Posterior vena cava (tissue), 2 donors: ENCODE measurements at regions of chr2 and their contacts with region 1.

Region 1: GRCh38 chr2:128076461-128077106 is 14.4 kb upstream of the UGGT1 start:
- DNase-seq: no peak

Region 2: DNA sequence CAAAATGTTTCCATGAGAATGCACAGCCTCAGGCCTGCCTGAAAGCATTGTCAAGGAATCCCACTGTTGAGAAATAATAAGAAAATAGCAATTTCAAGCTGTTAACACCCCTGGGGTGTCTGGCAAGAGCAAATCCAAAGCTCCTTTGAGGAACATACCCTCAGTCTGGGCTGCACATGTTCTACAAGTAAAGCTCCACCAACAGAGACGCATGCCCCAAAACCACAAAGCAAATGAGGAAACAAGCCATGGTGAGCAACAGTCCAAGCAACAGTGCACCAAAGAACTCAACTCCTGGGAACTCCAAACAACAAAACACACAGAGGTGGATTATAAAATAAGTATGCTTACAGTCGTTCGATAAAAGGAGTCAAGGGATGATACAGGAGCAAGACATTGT is 896.8 kb before region 1 on chr2:
- intact Hi-C with region 1: no loop called
- DNase-seq: no peak

Region 3: DNA sequence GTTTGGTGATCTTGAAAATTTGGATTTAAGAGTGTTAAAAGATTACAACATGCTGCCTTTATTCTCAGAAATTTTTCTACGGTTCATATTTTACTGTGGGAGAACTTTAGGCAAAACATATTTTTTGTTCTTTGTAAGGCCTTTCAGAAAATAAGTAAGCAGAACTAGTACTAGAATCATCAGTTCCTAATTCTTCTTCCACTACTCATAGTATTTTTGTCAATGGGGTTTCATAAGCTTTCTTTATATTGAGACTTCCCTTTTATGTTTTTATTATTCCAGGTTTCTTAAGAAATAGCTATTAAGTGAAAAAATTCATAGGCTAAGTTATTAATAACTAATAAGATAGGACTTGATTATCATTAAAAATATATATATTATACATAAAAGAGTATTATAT is 26.8 kb after region 1 on chr2:
- intact Hi-C with region 1: loop called in 1 of 2 experiments (anchors 1 kb)
- DNase-seq: no peak

Region 4: GRCh38 chr2:128178650-128179460 is 102.3 kb after region 1 on chr2:
- intact Hi-C with region 1: no loop called
- DNase-seq: peak; percentile 86

Region 5: GRCh38 chr2:128594953-128595677 is 518.5 kb after region 1 on chr2:
- intact Hi-C with region 1: loop called in 1 of 2 experiments (anchors 5 kb)
- DNase-seq: no peak